Activated naive CD4-positive, alpha-beta T cell treated with anti-CD3 and anti-CD28 coated beads, Interleukin-2, amount 10 ng/mL, durations not matched to agents 7 days and 5 days (primary cell): ENCODE measurements at regions of chr15 and their contacts with region 1.

Region 1: GRCh38 chr15:92808978-92809879 is 90.9 kb upstream of the CHD2 start:
- DNase-seq: peak; percentile 99
- H3K4me3 Mint-ChIP-seq: peak overlapping the region; percentile 81
- H3K27ac Mint-ChIP-seq: peak overlapping the region; percentile 99
- H3K4me1 Mint-ChIP-seq: peaks cover 59% of the 10 kb centered on the region
- H3K27me3 Mint-ChIP-seq: no peaks in the 10 kb centered on the region

Region 2: GRCh38 chr15:92473756-92474155 is 335.5 kb before region 1 on chr15:
- CTCF ChIA-PET with region 1: no interaction called
- DNase-seq: no peak
- H3K4me3 Mint-ChIP-seq: no peak overlapping the region
- H3K27ac Mint-ChIP-seq: no peak overlapping the region
- H3K4me1 Mint-ChIP-seq: no peaks in the 10 kb centered on the region
- H3K27me3 Mint-ChIP-seq: peaks cover 14% of the 10 kb centered on the region

Region 3: GRCh38 chr15:92820236-92821021 is 11.2 kb after region 1 on chr15:
- CTCF ChIA-PET with region 1: interaction called, 22 read pairs
- DNase-seq: peak; percentile 91
- H3K4me3 Mint-ChIP-seq: peak overlapping the region; percentile 77
- H3K27ac Mint-ChIP-seq: peak overlapping the region; percentile 96
- H3K4me1 Mint-ChIP-seq: peaks cover 74% of the 10 kb centered on the region
- H3K27me3 Mint-ChIP-seq: no peaks in the 10 kb centered on the region

Region 4: GRCh38 chr15:92831655-92832328 is 22.6 kb after region 1 on chr15:
- CTCF ChIA-PET with region 1: interaction called, 22 read pairs
- DNase-seq: peak; percentile 95
- H3K4me3 Mint-ChIP-seq: peak overlapping the region; percentile 65
- H3K27ac Mint-ChIP-seq: peak overlapping the region; percentile 98
- H3K4me1 Mint-ChIP-seq: peaks cover 56% of the 10 kb centered on the region
- H3K27me3 Mint-ChIP-seq: no peaks in the 10 kb centered on the region

Region 5: GRCh38 chr15:92881802-92882696 is 72.8 kb after region 1 on chr15:
- CTCF ChIA-PET with region 1: interaction called, 45 read pairs
- DNase-seq: peak; percentile 98
- H3K4me3 Mint-ChIP-seq: peak overlapping the region; percentile 90
- H3K27ac Mint-ChIP-seq: peak overlapping the region; percentile 99
- H3K4me1 Mint-ChIP-seq: peaks cover 57% of the 10 kb centered on the region
- H3K27me3 Mint-ChIP-seq: peaks cover 12% of the 10 kb centered on the region

Region 6: GRCh38 chr15:92903941-92904831 is 95.0 kb after region 1 on chr15:
- CTCF ChIA-PET with region 1: interaction called, 24 read pairs
- DNase-seq: peak; percentile 99
- H3K4me3 Mint-ChIP-seq: peak overlapping the region; percentile 96
- H3K27ac Mint-ChIP-seq: peak overlapping the region; percentile 100
- H3K4me1 Mint-ChIP-seq: peaks cover 59% of the 10 kb centered on the region
- H3K27me3 Mint-ChIP-seq: peaks cover 4% of the 10 kb centered on the region

Region 7: GRCh38 chr15:92917606-92918407 is 108.6 kb after region 1 on chr15:
- CTCF ChIA-PET with region 1: interaction called, 54 read pairs
- DNase-seq: peak; percentile 96
- H3K4me3 Mint-ChIP-seq: peak overlapping the region; percentile 42
- H3K27ac Mint-ChIP-seq: peak overlapping the region; percentile 96
- H3K4me1 Mint-ChIP-seq: peaks cover 85% of the 10 kb centered on the region
- H3K27me3 Mint-ChIP-seq: no peaks in the 10 kb centered on the region